ENCODE measurements at regions of chr9 and their contacts with region 1.

Region 1: GRCh38 chr9:131046581-131047202 is 37.7 kb downstream of the LAMC3 start:
- DNase-seq: peak; percentile 65 to 69
- ATAC-seq: peak; percentile 83 to 96
- H3K4me3 ChIP-seq: no peak overlapping the region
- H3K27ac ChIP-seq: no peak overlapping the region
- H3K4me1 ChIP-seq: no peaks in the 10 kb centered on the region
- CTCF ChIP-seq: peak; percentile 95
- EP300 ChIP-seq: no peak
- POLR2A ChIP-seq: no peak
- RAD21 ChIP-seq: peak; percentile 89 to 94

Region 2: GRCh38 chr9:130707225-130707976 is 339.3 kb before region 1 on chr9:
- CTCF ChIA-PET with region 1: interaction called, 21 read pairs
- POLR2A ChIA-PET with region 1: interaction called, 4 read pairs
- DNase-seq: peak; percentile 33 to 68
- ATAC-seq: peak; percentile 80 to 85
- H3K4me3 ChIP-seq: no peak overlapping the region
- H3K27ac ChIP-seq: no peak overlapping the region
- H3K4me1 ChIP-seq: peaks cover 11% of the 10 kb centered on the region; the same call in 1 of the 3 replicates
- CTCF ChIP-seq: peak; percentile 95
- EP300 ChIP-seq: no peak
- POLR2A ChIP-seq: no peak
- RAD21 ChIP-seq: peak; percentile 76

Region 3: DNA sequence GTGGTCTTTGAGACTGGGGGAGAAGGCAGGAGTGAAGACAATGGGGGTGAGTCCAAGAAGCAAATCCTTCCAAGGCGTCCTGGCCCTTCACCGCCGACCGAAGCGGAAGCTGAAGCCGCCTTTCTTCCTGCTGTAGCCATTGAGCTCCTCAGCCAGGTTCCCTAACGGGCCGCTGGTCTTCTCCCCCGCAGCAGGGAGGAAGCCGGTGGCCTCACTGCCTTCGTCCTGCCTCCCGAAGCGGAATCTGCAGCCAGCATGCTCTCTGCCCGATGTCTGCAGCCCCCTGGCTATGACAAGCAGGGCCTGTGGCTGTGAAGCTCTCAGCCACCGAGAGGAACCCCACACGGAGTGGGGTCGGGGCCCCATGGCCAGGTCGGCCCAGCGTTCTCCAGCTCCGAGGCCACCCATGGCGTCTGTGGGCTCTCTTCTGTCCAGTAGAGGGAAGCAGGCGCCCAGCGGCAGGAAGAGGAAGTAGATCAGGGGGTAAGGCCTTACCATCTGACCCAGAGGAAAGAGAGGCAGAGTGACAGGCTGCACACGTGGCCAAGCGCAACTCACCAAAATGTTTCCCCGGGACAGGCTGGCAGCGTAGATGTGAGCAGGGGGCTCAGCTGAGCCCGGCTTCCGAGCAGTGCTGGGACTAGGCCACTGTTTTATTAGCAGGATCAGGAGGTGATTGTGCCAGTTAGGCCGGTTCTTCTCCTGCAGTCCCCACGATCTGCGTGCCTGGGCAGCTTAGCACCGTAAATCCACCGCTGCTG is 153.2 kb before region 1 on chr9:
- CTCF ChIA-PET with region 1: interaction called, 14 read pairs
- POLR2A ChIA-PET with region 1: no interaction called
- DNase-seq: peak; percentile 35 to 67
- ATAC-seq: peak; percentile 63 to 79
- H3K4me3 ChIP-seq: no peak overlapping the region
- H3K27ac ChIP-seq: 0 out of 6 replicates have a peak overlapping the region, but pooled peaks of 1 of the 2 experiments have one; percentile 21
- H3K4me1 ChIP-seq: no peaks in the 10 kb centered on the region
- CTCF ChIP-seq: peak; percentile 48
- EP300 ChIP-seq: no peak
- POLR2A ChIP-seq: no peak
- RAD21 ChIP-seq: peak; percentile 73 to 82

Region 4: DNA sequence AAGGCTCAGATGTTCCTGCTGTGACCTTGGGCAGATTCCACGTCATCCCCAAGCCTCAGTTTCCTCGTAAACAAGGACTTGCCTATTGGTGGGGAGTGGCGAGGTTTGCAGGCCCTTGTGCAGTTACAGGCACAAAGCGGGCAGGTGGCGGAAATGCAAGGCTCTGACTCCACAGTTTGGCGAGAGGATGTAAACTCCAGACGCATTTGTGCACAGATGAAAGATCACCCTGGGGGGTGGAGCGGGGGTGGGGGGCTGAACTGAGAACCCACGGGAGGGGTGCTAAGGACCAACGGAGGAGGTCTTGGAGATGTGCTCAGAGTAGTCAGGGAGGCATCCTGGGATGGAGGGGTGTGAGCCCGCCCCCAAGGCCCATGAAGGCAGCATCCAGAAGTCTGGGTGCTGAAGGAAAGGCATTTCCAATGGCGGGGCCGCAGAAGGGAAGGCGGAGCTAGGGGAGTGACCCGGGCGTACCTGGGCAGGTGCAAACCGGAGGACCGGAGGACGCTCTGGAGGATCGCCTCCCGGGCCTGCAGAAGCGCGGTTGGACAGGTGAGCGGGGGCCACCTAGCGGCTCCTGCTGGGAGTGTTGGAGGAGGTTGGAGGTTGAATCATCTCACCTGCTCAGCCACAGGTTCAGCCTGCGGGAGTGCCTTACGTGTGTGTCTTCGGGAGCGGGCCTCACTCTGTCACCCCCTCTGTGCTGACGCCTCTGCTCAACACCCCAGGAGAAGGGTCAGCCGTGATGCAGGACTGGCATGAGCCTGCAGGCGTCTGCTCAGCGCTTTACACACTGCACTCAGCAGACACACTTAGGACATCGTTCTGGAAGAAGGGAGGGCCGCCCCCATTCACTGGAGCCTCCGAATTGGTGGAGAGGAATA is 105.8 kb before region 1 on chr9:
- CTCF ChIA-PET with region 1: interaction called, 21 read pairs
- POLR2A ChIA-PET with region 1: no interaction called
- DNase-seq: peak; percentile 73 to 74
- ATAC-seq: peak; percentile 54 to 74
- H3K4me3 ChIP-seq: no peak overlapping the region
- H3K27ac ChIP-seq: peak overlapping the region in 1 of 2 experiments; percentile 12; a peak in 1 of 6 replicates
- H3K4me1 ChIP-seq: peaks cover 46% of the 10 kb centered on the region
- CTCF ChIP-seq: peak; percentile 82
- EP300 ChIP-seq: no peak
- POLR2A ChIP-seq: no peak
- RAD21 ChIP-seq: peak; percentile 87 to 89

Region 5: GRCh38 chr9:130981756-130982137 is 64.9 kb before region 1 on chr9:
- CTCF ChIA-PET with region 1: interaction called, 13 read pairs
- POLR2A ChIA-PET with region 1: no interaction called
- DNase-seq: no peak
- ATAC-seq: no peak
- H3K4me3 ChIP-seq: no peak overlapping the region
- H3K27ac ChIP-seq: no peak overlapping the region
- H3K4me1 ChIP-seq: no peaks in the 10 kb centered on the region
- CTCF ChIP-seq: no peak
- EP300 ChIP-seq: no peak
- POLR2A ChIP-seq: no peak
- RAD21 ChIP-seq: no peak

Region 6: GRCh38 chr9:131019388-131020239 is 27.1 kb before region 1 on chr9:
- CTCF ChIA-PET with region 1: interaction called, 32 read pairs
- POLR2A ChIA-PET with region 1: no interaction called
- DNase-seq: no peak
- ATAC-seq: no peak
- H3K4me3 ChIP-seq: no peak overlapping the region
- H3K27ac ChIP-seq: no peak overlapping the region
- H3K4me1 ChIP-seq: no peaks in the 10 kb centered on the region
- CTCF ChIP-seq: no peak
- EP300 ChIP-seq: no peak
- POLR2A ChIP-seq: no peak
- RAD21 ChIP-seq: no peak

Region 7: GRCh38 chr9:131068076-131068816 is 21.6 kb after region 1 on chr9:
- CTCF ChIA-PET with region 1: interaction called, 30 read pairs
- POLR2A ChIA-PET with region 1: no interaction called
- DNase-seq: no peak
- ATAC-seq: no peak; a peak in 1 of 6 replicates
- H3K4me3 ChIP-seq: no peak overlapping the region
- H3K27ac ChIP-seq: no peak overlapping the region
- H3K4me1 ChIP-seq: no peaks in the 10 kb centered on the region
- CTCF ChIP-seq: no peak
- EP300 ChIP-seq: no peak
- POLR2A ChIP-seq: no peak
- RAD21 ChIP-seq: no peak